Activated CD4-positive, alpha-beta T cell treated with anti-CD3 and anti-CD28 coated beads for 36 hours (primary cell): ENCODE measurements at regions of chr4 and their contacts with region 1.

Region 1: GRCh38 chr4:37268319-37268718 is 23.8 kb downstream of the NWD2 start:
- DNase-seq: no peak
- ATAC-seq: no peak
- H3K4me3 Mint-ChIP-seq: no peak overlapping the region
- H3K27ac Mint-ChIP-seq: no peak overlapping the region
- H3K4me1 Mint-ChIP-seq: no peaks in the 10 kb centered on the region
- H3K27me3 Mint-ChIP-seq: peaks cover 12% of the 10 kb centered on the region

Region 2: GRCh38 chr4:36692586-36692985 is 575.7 kb before region 1 on chr4:
- CTCF ChIA-PET with region 1: no interaction called
- POLR2A ChIA-PET with region 1: no interaction called
- intact Hi-C with region 1: loop called in 1 of 2 experiments (anchors 10 kb)
- DNase-seq: no peak
- ATAC-seq: no peak
- H3K4me3 Mint-ChIP-seq: no peak overlapping the region
- H3K27ac Mint-ChIP-seq: no peak overlapping the region
- H3K4me1 Mint-ChIP-seq: no peaks in the 10 kb centered on the region
- H3K27me3 Mint-ChIP-seq: no peaks in the 10 kb centered on the region

Region 3: DNA sequence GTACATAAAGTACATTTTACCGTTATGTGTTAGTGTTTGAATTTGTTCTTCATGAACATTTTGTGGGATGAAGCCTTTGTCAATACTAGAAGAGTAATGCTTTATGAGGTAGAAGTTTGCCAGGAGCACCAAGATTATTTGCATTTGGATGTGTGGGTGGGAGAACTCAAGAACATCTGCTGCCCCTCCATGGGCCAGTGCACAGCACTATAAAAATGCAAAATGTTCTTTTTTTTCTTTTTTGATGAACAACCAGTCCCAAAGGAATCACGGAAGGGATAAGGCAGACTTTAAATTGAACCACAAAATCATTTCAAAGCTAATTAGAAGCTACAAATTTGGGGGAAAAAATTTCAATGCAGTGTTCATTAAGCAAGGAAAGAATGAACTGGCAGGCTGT is 324.1 kb before region 1 on chr4:
- CTCF ChIA-PET with region 1: no interaction called
- POLR2A ChIA-PET with region 1: no interaction called
- intact Hi-C with region 1: no loop called
- DNase-seq: no peak
- ATAC-seq: no peak
- H3K4me3 Mint-ChIP-seq: no peak overlapping the region
- H3K27ac Mint-ChIP-seq: no peak overlapping the region
- H3K4me1 Mint-ChIP-seq: no peaks in the 10 kb centered on the region
- H3K27me3 Mint-ChIP-seq: no peaks in the 10 kb centered on the region

Region 4: DNA sequence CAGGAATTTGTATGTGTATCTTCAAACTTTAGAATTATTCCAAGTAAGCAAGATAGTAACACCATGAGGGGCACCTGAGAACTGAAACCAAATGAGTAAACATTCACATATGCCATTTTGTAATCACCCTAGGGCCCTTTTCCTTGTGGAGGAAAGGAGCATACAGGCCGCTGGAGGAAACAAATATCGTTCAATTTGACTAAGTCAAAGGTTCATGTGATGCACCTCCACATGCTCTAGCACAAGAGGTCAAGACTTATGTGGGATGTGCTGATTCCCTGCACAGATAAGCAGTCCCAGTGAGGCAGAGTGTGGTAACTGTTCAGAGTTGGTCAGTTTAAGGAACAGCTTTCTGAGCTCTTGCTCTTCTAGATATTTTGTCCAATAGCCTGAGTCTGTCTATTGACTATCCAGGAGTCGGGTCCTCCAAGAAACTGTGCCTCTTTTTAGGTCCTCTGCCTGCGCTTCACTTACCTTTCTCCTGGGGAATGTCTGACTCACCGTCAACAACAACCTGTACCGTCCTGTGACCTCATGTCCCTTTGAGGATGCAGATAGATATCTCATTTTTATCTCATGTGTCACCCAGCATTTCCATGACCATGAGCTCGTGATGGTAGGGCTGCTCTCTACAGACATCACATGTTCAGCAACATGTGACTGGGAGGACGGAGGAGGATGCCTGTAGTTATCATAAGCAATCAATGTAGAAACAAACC is 173.1 kb after region 1 on chr4:
- CTCF ChIA-PET with region 1: no interaction called
- POLR2A ChIA-PET with region 1: no interaction called
- intact Hi-C with region 1: no loop called
- DNase-seq: no peak
- ATAC-seq: no peak
- H3K4me3 Mint-ChIP-seq: no peak overlapping the region
- H3K27ac Mint-ChIP-seq: no peak overlapping the region
- H3K4me1 Mint-ChIP-seq: no peaks in the 10 kb centered on the region
- H3K27me3 Mint-ChIP-seq: peaks cover 17% of the 10 kb centered on the region